PC-3 (cell line): ENCODE measurements at regions of chr2 and their contacts with region 1.

Region 1: GRCh38 chr2:188607239-188607883 is 315.7 kb downstream of the GULP1 start:
- DNase-seq: no peak
- ATAC-seq: no peak
- H3K4me3 ChIP-seq: no peak overlapping the region
- H3K27ac ChIP-seq: no peak overlapping the region
- H3K4me1 ChIP-seq: no peaks in the 10 kb centered on the region; the same call in 1 of the 2 replicates
- H3K27me3 ChIP-seq: no peaks in the 10 kb centered on the region
- CTCF ChIP-seq: no peak

Region 2: DNA sequence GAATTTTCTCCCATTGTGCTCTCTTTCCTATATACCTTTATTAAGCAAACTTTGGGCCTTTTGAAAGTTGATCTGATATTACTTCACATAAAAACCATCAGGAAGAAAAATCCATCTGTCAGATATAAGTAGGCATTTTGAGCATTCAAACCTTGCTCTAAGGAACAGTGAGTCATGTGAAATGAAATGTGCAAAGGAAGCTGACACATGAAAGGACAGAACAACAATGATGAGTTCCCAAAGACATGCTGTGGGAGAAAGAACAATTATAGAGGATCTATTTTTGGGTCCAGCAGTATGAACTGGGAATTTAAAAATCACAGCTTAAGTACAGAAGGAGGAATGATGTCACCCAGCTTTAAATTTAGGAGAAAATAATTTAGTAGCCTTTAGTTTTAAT is 1177.4 kb before region 1 on chr2:
- CTCF ChIA-PET with region 1: no interaction called
- POLR2A ChIA-PET with region 1: no interaction called
- intact Hi-C with region 1: no loop called
- DNase-seq: peak; percentile 33
- ATAC-seq: peak; percentile 85
- H3K4me3 ChIP-seq: no peak overlapping the region
- H3K27ac ChIP-seq: no peak overlapping the region
- H3K4me1 ChIP-seq: 0 out of 2 replicates have a peak, but pooled peaks cover 4% of the 10 kb centered on the region
- H3K27me3 ChIP-seq: no peaks in the 10 kb centered on the region
- CTCF ChIP-seq: no peak

Region 3: DNA sequence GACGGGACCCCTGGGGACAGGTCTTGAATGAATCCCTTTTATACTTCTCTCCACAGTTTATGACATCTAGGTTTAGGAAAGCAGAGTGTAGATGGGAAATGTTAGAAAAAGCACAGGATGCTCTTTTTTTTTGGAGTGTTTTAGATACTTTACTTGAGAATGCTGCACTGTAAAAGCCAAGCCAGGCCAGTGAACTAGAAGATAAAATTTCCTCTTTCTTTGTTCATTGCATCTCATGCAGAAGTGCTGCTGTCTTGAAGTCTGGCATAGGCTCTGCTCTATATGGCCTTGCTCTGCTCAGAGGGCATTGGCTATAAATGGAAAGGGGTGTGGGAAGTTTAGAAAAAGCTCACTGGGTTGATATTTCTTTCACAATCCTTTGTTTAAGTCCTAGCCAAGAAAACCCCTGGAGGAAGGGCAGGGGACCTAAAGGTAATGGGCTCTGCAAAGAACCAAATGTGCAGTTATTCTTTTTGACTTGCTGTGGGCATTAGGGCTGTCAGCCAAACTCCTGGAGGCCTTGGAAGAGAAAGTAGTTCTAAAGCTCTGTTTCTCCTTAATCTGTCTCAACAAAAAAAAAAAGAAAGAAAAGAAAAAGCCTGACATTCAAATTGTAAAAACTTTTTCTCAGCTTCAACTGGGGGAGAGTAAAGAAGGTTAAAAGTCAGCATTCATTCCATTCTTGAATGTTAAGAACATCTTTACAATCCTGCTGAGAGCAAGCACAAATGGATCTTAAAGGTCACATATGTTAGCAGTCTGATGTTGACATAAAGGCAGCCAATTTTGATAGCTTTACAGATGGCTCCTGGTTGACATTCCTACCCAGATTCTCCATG is 22.5 kb after region 1 on chr2:
- CTCF ChIA-PET with region 1: no interaction called
- POLR2A ChIA-PET with region 1: interaction called, 12 read pairs
- intact Hi-C with region 1: no loop called
- DNase-seq: no peak
- ATAC-seq: no peak; the same call in 1 of the 2 replicates
- H3K4me3 ChIP-seq: no peak overlapping the region
- H3K27ac ChIP-seq: no peak overlapping the region
- H3K4me1 ChIP-seq: peaks cover 14% of the 10 kb centered on the region
- H3K27me3 ChIP-seq: no peaks in the 10 kb centered on the region
- CTCF ChIP-seq: no peak

Region 4: DNA sequence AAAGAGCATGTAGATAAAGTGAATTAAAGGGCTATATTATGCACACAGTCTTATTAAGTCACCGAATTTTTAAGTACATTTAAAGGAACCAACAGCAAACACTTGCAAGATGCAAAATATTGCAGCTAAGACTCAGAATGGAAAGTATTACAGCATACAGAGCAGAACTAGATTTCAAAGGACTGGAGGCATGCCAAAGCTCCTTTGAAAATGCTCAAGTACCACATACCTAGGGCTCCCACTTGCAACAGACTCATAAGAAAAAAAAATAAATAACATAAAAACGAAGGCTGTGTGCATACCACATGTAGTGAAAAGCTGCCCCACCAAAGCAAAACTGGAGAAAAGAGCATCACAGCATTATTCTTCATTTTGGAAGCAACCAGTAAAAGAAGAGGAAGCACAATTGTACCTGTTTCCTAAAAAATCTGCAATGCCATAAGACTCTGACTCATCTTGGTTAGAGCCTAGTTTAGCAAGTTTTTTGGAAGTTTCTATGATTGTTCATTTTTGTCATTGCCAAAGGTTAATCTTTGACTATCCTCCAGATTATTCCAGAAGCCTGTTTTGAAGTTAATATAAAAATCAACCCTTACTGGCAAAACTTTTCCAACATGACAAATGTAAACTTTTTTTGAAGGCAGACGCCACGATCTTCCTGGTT is 60.8 kb after region 1 on chr2:
- CTCF ChIA-PET with region 1: no interaction called
- POLR2A ChIA-PET with region 1: no interaction called
- intact Hi-C with region 1: loop called (anchors 10 kb)
- DNase-seq: peak; percentile 47
- ATAC-seq: peak; percentile 18; the same call in 1 of the 2 replicates
- H3K4me3 ChIP-seq: no peak overlapping the region
- H3K27ac ChIP-seq: no peak overlapping the region
- H3K4me1 ChIP-seq: peaks cover 10% of the 10 kb centered on the region
- H3K27me3 ChIP-seq: no peaks in the 10 kb centered on the region
- CTCF ChIP-seq: no peak